Esophagus muscularis mucosa (tissue), 4 donors: ENCODE measurements at regions of chr7 and their contacts with region 1.

Region 1: DNA sequence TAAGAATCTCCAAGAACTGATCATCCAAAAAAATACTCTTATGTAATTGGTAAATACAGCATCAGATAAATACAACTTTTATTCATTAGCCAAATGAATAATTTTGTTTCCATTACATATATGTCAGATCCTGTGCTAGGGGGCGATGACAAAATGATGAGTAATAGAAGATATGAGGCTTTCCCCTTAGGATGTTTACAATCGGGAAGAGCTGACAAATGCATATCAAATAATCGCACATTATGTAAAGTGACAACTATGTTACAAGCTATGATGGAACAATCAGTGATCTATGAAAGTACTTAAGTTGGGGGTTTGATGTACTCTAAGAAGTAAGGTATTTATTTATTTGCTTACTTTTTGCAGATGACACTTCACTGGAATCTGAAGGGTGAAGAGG is 465.6 kb upstream of the VSTM2A start:
- DNase-seq: no peak
- H3K4me3 ChIP-seq: no peak overlapping the region
- H3K27ac ChIP-seq: no peak overlapping the region
- H3K4me1 ChIP-seq: no peaks in the 10 kb centered on the region
- H3K27me3 ChIP-seq: no peaks in the 10 kb centered on the region
- CTCF ChIP-seq: no peak
- EP300 ChIP-seq: no peak
- POLR2A ChIP-seq: no peak

Region 2: DNA sequence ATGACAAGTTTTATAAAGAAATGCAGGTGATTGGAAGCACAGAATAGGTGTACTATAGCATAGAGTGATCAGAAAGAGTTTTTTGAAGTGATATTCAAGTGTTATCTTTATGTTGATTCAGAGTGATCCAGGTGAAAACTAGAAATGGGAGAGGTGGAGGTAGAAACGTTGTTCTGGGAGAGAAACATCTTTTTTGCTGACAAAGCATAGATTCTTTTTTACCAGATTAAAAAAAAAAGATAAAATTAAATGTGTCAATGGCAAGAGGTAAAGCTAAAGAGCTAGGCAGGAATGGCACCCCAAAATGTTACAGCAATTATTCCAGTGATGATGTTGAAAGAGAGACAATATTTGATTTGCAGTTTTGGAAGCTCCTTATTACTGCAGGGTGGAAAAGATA is 453.0 kb after region 1 on chr7:
- intact Hi-C with region 1: loop called (anchors 10 kb)
- DNase-seq: no peak
- H3K4me3 ChIP-seq: no peak overlapping the region
- H3K27ac ChIP-seq: no peak overlapping the region
- H3K4me1 ChIP-seq: no peaks in the 10 kb centered on the region
- H3K27me3 ChIP-seq: no peaks in the 10 kb centered on the region
- CTCF ChIP-seq: no peak
- EP300 ChIP-seq: no peak
- POLR2A ChIP-seq: no peak